WTC11 (cell line): ENCODE measurements at regions of chr14 and their contacts with region 1.

Region 1: DNA sequence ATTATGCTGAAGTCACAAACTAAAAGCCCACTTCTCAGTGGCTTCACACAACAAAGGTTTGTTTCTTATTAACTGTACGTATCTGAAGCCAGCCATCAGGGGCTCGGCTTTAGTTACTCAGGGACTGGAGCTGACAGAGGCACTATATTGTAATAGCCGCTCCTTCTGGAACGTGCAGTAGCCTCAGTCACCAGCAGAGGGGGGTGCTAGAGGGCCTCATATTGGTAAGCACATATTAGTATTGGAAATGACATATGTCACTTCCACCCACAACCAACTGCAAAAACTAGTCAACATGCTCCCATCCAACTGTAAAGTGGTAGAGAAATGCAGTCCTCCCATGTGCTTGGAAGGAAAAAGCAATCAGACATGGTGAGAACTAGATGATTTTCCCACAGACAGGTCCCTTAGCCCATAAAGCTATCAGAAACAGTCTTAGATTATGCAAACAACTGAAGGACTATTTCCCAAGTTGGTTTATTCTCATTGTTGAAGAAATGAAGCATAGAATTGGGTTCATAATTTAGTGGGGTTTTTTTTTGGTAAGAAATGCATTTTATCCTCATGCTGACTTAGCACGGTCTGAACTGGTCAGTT is 183.6 kb upstream of the G2E3 start:
- DNase-seq: peak; percentile 80
- ATAC-seq: peak; percentile 97
- H3K4me3 Mint-ChIP-seq: no peak overlapping the region
- H3K27ac Mint-ChIP-seq: no peak overlapping the region
- H3K4me1 Mint-ChIP-seq: peaks cover 6% of the 10 kb centered on the region
- H3K27me3 Mint-ChIP-seq: no peaks in the 10 kb centered on the region
- CTCF ChIP-seq: peak; percentile 78

Region 2: DNA sequence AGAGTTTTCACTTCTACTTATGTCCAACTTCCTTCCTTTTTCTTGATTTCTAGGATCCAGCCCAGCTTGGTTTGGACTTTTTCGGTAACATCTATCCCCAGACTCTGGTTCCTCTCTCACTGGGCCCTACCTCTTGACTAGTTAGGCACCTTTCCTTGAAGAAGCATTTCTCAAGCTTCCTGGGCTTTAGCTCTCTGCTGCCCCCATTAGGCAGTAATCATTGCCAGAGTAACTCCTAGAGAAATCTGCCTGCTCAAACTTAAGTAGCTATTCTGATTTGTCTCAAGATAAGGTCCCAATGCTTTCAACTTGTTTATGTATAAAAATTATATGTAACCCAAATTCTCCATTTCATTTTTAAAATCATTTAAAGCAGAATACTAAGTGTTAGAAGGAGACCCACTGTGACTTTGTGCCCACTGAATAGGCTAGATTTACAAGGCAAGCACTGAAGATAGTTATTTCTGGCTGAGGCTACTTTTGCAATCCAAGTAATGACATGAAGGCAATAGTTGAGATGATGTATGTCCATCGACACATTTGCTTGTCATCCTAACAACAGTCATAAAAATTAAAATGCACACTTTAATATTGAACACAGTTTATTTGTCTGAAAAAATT is 91.5 kb before region 1 on chr14:
- CTCF ChIA-PET with region 1: interaction called, 10 read pairs
- POLR2A ChIA-PET with region 1: no interaction called
- DNase-seq: peak; percentile 73
- ATAC-seq: peak; percentile 93
- H3K4me3 Mint-ChIP-seq: no peak overlapping the region
- H3K27ac Mint-ChIP-seq: no peak overlapping the region
- H3K4me1 Mint-ChIP-seq: no peaks in the 10 kb centered on the region
- H3K27me3 Mint-ChIP-seq: no peaks in the 10 kb centered on the region
- CTCF ChIP-seq: no peak; the same call in 1 of the 2 replicates

Region 3: DNA sequence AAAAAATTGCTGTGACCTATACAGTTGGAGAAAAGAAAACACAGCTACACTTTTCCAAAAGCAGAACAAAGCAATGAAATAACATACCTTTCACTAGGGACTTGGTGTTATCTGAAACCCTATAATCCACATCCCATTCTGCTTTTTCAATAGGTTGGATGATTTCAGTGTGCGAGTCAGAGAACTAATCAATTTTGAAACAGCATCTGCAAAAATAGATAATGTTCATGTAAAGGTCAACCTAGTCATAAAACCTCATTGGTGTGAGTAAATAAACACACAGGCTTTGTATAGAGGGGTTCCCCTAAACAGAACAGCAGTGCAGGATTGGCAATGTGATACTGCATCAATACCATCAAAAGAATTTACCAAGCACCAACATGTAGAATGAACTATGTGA is 10.5 kb after region 1 on chr14:
- CTCF ChIA-PET with region 1: interaction called, 16 read pairs
- POLR2A ChIA-PET with region 1: no interaction called
- DNase-seq: no peak
- ATAC-seq: no peak
- H3K4me3 Mint-ChIP-seq: no peak overlapping the region
- H3K27ac Mint-ChIP-seq: no peak overlapping the region
- H3K4me1 Mint-ChIP-seq: peaks cover 6% of the 10 kb centered on the region; the same call in 1 of the 2 replicates
- H3K27me3 Mint-ChIP-seq: no peaks in the 10 kb centered on the region
- CTCF ChIP-seq: no peak

Region 4: GRCh38 chr14:30402846-30403245 is 27.5 kb after region 1 on chr14:
- CTCF ChIA-PET with region 1: interaction called, 14 read pairs
- POLR2A ChIA-PET with region 1: no interaction called
- DNase-seq: no peak
- ATAC-seq: no peak
- H3K4me3 Mint-ChIP-seq: no peak overlapping the region
- H3K27ac Mint-ChIP-seq: no peak overlapping the region
- H3K4me1 Mint-ChIP-seq: peaks cover 4% of the 10 kb centered on the region; the same call in 1 of the 2 replicates
- H3K27me3 Mint-ChIP-seq: no peaks in the 10 kb centered on the region; the same call in 1 of the 2 replicates
- CTCF ChIP-seq: no peak

Region 5: GRCh38 chr14:30443368-30444007 is 68.1 kb after region 1 on chr14:
- CTCF ChIA-PET with region 1: interaction called, 39 read pairs
- POLR2A ChIA-PET with region 1: no interaction called
- DNase-seq: no peak
- ATAC-seq: peak; percentile 59; the same call in 1 of the 2 replicates
- H3K4me3 Mint-ChIP-seq: no peak overlapping the region
- H3K27ac Mint-ChIP-seq: no peak overlapping the region
- H3K4me1 Mint-ChIP-seq: peaks cover 8% of the 10 kb centered on the region
- H3K27me3 Mint-ChIP-seq: no peaks in the 10 kb centered on the region
- CTCF ChIP-seq: no peak

Region 6: GRCh38 chr14:30521899-30522736 is 146.7 kb after region 1 on chr14:
- CTCF ChIA-PET with region 1: interaction called, 16 read pairs
- POLR2A ChIA-PET with region 1: no interaction called
- DNase-seq: no peak
- ATAC-seq: no peak
- H3K4me3 Mint-ChIP-seq: no peak overlapping the region
- H3K27ac Mint-ChIP-seq: no peak overlapping the region
- H3K4me1 Mint-ChIP-seq: peaks cover 3% of the 10 kb centered on the region; the same call in 1 of the 2 replicates
- H3K27me3 Mint-ChIP-seq: no peaks in the 10 kb centered on the region
- CTCF ChIP-seq: peak; percentile 52